Activated B cell treated with CpG ODN at 0.5 μM for 24 hours (primary cell): ENCODE measurements at regions of chr1 and their contacts with region 1.

Region 1: GRCh38 chr1:27618341-27619082 is 14.6 kb upstream of the AHDC1 start:
- DNase-seq: no peak
- ATAC-seq: peak; percentile 84
- H3K4me3 Mint-ChIP-seq: peak overlapping the region; percentile 8
- H3K27ac Mint-ChIP-seq: peak overlapping the region; percentile 77
- H3K4me1 Mint-ChIP-seq: peaks cover 44% of the 10 kb centered on the region
- H3K27me3 Mint-ChIP-seq: no peaks in the 10 kb centered on the region
- CTCF ChIP-seq: no peak

Region 2: GRCh38 chr1:27525296-27526272 is 92.9 kb before region 1 on chr1:
- CTCF ChIA-PET with region 1: no interaction called
- POLR2A ChIA-PET with region 1: no interaction called
- intact Hi-C with region 1: no loop called
- DNase-seq: peak; percentile 51
- ATAC-seq: peak; percentile 64
- H3K4me3 Mint-ChIP-seq: peak overlapping the region; percentile 41
- H3K27ac Mint-ChIP-seq: peak overlapping the region; percentile 79
- H3K4me1 Mint-ChIP-seq: peaks cover 76% of the 10 kb centered on the region
- H3K27me3 Mint-ChIP-seq: no peaks in the 10 kb centered on the region
- CTCF ChIP-seq: no peak

Region 3: GRCh38 chr1:27634177-27634984 is 15.9 kb after region 1 on chr1:
- CTCF ChIA-PET with region 1: interaction called, 3 read pairs
- POLR2A ChIA-PET with region 1: interaction called, 13 read pairs
- intact Hi-C with region 1: no loop called
- DNase-seq: peak; percentile 64
- ATAC-seq: peak; percentile 16
- H3K4me3 Mint-ChIP-seq: peak overlapping the region; percentile 83
- H3K27ac Mint-ChIP-seq: peak overlapping the region; percentile 87
- H3K4me1 Mint-ChIP-seq: peaks cover 89% of the 10 kb centered on the region
- H3K27me3 Mint-ChIP-seq: no peaks in the 10 kb centered on the region
- CTCF ChIP-seq: no peak